ENCODE measurements at regions of chr4 and their contacts with region 1.

Region 1: DNA sequence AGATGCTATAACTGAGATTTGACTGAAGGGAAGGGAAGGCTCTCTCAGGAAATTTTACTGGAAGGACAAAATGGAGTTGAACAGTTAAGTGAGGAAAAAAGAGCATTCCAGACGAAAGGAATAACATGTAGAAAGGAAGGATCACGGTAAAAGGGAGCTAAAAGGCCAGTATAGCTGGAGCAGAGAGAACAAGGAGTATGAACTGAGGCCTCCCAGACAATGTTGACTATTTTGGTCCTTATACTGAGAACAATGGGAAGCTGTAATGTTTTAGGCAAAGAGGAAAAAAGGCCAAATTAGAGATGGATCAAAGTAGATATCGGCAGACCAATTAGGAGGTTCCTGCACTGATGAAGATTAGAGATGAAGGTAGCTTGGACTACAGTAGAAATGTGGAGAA is 26.8 kb upstream of the SCD5 start:
- DNase-seq: no peak
- ATAC-seq: no peak

Region 2: GRCh38 chr4:82865592-82865991 is 40.2 kb after region 1 on chr4:
- intact Hi-C with region 1: loop called in 1 of 2 experiments (anchors 5 kb)
- DNase-seq: no peak
- ATAC-seq: peak in 1 of 2 donors; percentile 78